ENCODE measurements at regions of chr4 and their contacts with region 1.

Region 1: DNA sequence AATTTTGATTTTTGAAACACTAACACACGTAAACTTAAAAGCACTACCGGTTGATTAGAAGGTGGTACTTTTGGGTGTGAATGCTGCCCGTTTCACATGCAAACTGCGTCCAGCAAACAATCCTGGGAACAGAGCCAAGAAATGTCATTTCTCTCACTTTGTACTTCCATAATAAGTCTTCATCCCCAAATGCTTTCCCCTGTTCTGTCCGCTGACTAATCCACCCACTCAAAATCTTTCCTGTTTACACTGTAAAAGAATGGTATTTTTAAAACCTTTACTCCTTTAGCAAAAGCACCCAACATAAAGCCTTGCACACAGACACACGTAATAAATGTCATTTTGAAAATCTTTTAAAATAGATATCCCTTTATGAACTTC is 39.1 kb upstream of the PDLIM5 start:
- DNase-seq: no peak

Region 2: GRCh38 chr4:94304365-94304971 is 108.2 kb before region 1 on chr4:
- intact Hi-C with region 1: no loop called
- DNase-seq: no peak

Region 3: GRCh38 chr4:94548571-94548970 is 135.9 kb after region 1 on chr4:
- intact Hi-C with region 1: loop called (anchors 5 kb)
- DNase-seq: no peak

Measured in cardiac septum (tissue), 1 donor.